ENCODE measurements at regions of chr11 and their contacts with region 1.

Region 1: DNA sequence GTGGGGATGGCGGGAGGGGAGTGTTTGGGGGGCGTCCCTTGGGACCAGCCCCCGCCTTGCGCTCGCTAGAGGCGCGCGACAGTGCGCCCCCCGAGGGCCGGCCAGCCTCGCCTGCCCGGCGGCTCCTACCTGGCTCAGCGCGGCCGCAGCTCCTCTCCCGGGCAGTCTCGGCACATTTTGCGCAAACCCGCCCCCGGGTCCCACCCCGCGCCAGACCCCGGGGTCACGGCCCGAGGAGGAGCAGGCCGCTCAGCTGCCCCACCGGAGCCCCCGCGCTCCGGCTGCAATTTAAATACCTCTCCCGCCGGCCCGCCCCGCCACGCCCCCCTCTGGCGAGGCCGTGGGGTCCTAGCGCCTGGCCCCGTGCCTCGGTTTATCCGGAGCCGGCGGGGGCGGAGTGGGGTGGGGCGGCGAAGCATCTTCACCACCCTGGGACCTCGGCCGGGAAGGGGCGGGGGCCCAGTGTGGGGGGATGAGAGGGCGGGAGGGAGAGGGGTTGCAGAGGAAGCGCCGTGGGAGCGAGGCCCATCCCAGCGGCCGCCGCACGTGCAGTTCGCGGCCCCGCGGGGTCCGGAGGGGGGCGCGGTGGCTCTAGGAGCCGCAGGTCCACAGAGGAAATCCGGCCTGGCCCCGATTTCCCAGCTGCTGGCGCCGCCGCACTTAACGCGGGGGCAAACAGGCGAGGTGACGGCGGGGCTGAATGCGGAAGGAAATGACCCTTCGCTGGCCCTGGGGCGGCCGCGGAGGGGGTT is at the start of gene LRRC32:
- DNase-seq: peak; percentile 83
- H3K4me3 ChIP-seq: peak within 1 kb of the TSS; percentile 79
- H3K27ac ChIP-seq: peak within 1 kb of the TSS; percentile 94
- H3K4me1 ChIP-seq: peaks cover 83% of the 10 kb centered on the region
- CTCF ChIP-seq: peak; percentile 50
- total RNA-seq, gene LRRC32: 5.4 and 5.5 TPM in 2 replicates

Region 2: DNA sequence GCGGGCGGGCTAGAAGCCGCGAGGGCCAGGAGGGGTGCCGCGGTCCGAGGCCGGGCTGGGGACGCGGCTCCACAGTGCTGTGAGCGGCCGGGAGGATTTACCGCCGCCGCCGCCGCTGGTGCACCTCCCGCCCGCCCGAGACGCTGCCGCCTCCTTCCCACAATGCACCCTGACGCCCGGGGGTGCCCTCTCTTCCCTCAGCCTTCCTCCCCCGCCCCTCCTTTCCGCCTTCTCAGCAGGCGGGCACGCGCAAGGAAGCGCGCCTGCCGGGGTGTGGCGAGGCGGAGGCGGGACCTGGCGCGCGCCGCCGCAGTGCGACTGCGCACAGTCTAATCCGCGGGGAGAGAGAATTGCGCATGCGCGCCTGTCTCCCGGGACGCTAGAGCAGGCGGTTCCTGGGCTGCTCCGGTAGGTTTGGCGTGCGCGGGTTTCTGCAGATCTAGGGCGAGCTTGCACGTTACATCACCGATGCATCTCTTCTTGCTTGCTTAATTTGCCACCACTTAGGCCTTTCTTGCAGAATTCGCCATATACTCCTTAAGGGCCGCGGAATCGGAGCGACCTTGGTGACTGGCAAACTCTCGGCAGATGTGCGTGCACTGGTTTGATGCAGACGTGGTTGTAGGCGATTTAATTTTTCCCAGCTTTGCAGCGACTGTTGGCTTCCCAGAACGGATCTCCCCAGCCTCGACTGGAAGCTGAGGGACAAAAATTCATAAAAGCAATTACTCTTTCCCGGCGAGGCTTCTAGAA is 289.5 kb before region 1 on chr11 and contains the starts of genes GVQW3 and THAP12:
- CTCF ChIA-PET with region 1: no interaction called
- POLR2A ChIA-PET with region 1: interaction called, 3 read pairs
- intact Hi-C with region 1: loop called (anchors 2 kb)
- DNase-seq: peak; percentile 98
- H3K4me3 ChIP-seq: peak within 1 kb of the TSS; percentile 94
- H3K27ac ChIP-seq: peak within 1 kb of the TSS; percentile 59
- H3K4me1 ChIP-seq: peaks cover 54% of the 10 kb centered on the region
- CTCF ChIP-seq: peak; percentile 30
- total RNA-seq, gene GVQW3: 14.4 and 15.4 TPM in 2 replicates
- total RNA-seq, gene THAP12: 52.5 and 55.7 TPM in 2 replicates

Region 3: DNA sequence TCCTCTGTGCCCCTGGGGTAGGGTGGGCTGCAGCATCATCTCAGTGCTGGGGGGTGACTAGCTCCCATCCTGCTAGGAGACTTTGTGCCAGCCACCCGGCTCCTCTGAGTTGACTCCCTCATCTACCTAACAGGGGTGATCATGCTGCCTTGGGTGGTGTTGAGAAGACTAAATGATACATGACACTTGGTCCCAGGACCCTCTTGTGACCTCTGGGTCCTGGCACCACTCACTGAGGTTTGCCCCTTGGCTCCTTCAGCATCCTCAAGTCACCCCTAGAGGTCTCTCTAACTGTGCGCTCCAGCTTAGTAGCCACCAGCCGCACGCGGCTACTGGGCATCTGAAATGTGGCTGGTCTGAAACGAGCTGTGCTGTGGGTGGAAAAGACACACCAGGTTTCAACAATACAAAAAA is 72.2 kb before region 1 on chr11:
- CTCF ChIA-PET with region 1: interaction called, 22 read pairs
- POLR2A ChIA-PET with region 1: interaction called, 11 read pairs
- intact Hi-C with region 1: no loop called
- DNase-seq: peak; percentile 87
- H3K4me3 ChIP-seq: no peak overlapping the region
- H3K27ac ChIP-seq: no peak overlapping the region
- H3K4me1 ChIP-seq: peaks cover 15% of the 10 kb centered on the region
- CTCF ChIP-seq: peak; percentile 95

Region 4: DNA sequence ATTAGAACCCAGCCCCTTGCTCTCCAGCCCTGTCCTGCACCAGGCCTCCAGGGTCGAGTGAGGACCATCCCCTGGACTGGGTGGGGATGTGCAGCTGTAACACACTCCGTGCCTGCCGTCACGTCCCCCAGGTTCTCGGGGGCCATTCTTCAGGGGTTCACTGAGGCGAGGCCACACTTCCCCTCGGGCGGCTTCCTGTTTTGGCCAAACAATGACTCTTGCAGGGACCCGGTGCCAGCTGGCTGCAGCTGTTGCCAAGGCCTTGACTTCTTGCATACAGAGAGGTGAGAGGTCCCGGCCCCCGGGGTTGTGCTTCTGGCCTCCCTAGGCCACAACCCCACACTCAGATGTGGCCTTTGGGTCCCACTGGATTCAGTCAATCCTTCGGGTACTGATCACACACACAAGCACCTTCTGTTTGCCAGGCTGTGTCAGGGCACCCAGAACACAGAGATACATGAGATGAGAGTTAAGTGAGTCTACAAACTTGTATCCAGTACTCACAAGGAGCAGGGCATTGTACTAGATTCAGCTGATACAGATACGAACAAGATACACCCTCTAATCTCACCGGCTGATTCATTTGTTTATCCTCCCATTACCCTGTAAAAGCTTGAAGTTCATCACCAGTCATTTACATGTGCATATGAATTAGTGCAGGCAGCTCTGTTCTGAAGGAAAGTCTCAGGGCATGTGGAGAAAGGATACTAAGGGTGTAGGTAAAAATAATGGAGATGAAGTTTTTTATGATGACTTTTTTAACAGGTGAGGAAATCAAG is 33.0 kb before region 1 on chr11:
- CTCF ChIA-PET with region 1: interaction called, 16 read pairs
- POLR2A ChIA-PET with region 1: interaction called, 42 read pairs
- intact Hi-C with region 1: loop called (anchors 1 kb)
- DNase-seq: peak; percentile 98
- H3K4me3 ChIP-seq: peak overlapping the region; percentile 32
- H3K27ac ChIP-seq: peak overlapping the region; percentile 88
- H3K4me1 ChIP-seq: peaks cover 50% of the 10 kb centered on the region
- CTCF ChIP-seq: no peak

Region 5: GRCh38 chr11:76768088-76768908 is 97.6 kb after region 1 on chr11:
- CTCF ChIA-PET with region 1: no interaction called
- POLR2A ChIA-PET with region 1: no interaction called
- intact Hi-C with region 1: no loop called
- DNase-seq: no peak
- H3K4me3 ChIP-seq: no peak overlapping the region
- H3K27ac ChIP-seq: no peak overlapping the region
- H3K4me1 ChIP-seq: peaks cover 3% of the 10 kb centered on the region
- CTCF ChIP-seq: no peak

Measured in OCI-LY7 (cell line).